CD4-positive, alpha-beta memory T cell (primary cell): ENCODE measurements at regions of chr10 and their contacts with region 1.

Region 1: DNA sequence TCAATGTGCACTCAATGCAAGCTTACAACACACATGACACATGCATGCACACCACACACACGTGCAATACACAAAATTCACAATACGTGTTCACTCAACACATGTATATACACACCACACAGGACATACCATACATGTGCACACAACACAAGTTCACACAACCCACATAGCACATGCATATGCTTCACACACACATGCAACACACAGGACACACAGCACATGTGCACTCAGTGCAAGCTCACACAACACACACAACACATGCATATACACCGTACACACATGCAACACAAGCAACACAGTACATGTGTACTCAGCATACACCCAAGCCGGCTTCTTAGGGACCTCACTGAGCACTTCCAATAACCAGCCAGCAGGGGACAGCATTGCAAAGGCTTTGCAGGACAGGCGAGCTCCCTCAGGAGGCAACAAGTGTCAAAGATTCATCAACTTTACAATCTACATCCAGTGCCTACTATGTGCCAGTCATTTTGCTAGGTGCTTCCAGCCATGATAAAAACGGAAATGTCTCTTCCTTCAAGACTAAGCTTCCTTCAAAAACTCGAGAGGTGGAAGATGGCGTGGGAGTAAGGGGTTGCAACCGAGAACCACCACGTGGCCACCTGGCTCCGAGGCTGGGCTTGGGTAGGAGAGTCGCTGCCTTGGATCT is 61.1 kb downstream of the JCAD start:
- DNase-seq: peak; percentile 68 to 74 (median 71)
- H3K4me3 ChIP-seq: no peak overlapping the region
- H3K4me3 Mint-ChIP-seq: no peak overlapping the region
- H3K27ac ChIP-seq: no peak overlapping the region
- H3K27ac Mint-ChIP-seq: no peak overlapping the region
- H3K4me1 ChIP-seq: peaks cover 12% of the 10 kb centered on the region
- H3K4me1 Mint-ChIP-seq: peaks cover 5 to 15% (median 9%) of the 10 kb centered on the region in 4 donors
- H3K27me3 ChIP-seq: no peaks in the 10 kb centered on the region
- H3K27me3 Mint-ChIP-seq: peaks cover 42 to 44% of the 10 kb centered on the region in 2 donors

Region 2: GRCh38 chr10:30027057-30028005 is 29.1 kb after region 1 on chr10:
- CTCF ChIA-PET with region 1: interaction called, 7 read pairs
- POLR2A ChIA-PET with region 1: no interaction called
- intact Hi-C with region 1: loop called (anchors 1 kb)
- DNase-seq: peak; percentile 91 to 98 (median 95)
- H3K4me3 ChIP-seq: peak overlapping the region; percentile 19 to 61
- H3K4me3 Mint-ChIP-seq: peak overlapping the region; percentile 69 to 91 (median 80)
- H3K27ac ChIP-seq: no peak overlapping the region
- H3K27ac Mint-ChIP-seq: peak overlapping the region; percentile 92 to 98 (median 94)
- H3K4me1 ChIP-seq: peaks cover 33% of the 10 kb centered on the region
- H3K4me1 Mint-ChIP-seq: peaks cover 20 to 47% (median 36%) of the 10 kb centered on the region in 4 donors
- H3K27me3 ChIP-seq: peaks cover 12% of the 10 kb centered on the region
- H3K27me3 Mint-ChIP-seq: peaks cover 33 to 36% of the 10 kb centered on the region in 2 donors

Region 3: DNA sequence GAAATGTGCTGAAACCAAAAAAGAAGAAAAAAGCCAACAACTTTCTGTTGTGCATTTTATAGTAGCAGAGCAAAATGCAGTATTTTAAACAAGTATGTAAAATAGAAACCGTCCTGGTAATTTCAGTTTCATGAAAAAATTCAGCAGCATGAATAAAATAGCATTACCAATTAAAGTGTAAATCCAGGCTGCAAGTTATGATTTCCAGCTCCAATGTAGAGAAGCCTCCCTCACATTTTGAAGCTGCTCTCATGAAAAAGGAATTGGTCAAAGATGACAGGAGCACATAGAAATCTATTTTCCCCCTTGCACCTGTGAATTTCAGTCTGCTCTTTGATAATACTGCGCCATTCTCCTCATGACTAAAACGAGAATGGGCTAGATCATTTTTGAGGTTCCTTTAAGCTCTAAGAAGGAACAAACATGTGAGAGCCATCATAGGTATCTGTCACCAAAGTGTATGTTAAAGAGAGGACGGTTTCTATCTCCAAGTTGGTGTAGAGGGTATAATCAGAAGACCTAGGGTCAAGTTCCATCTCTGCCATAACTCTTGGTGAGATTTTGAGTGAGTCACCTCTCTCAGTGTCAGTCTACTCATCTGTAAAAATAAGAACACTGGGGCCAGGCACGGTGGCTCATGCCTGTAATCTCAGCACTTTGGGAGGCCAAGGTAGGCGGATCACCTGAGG is 243.3 kb after region 1 on chr10:
- CTCF ChIA-PET with region 1: interaction called, 69 read pairs
- POLR2A ChIA-PET with region 1: interaction called, 3 read pairs
- intact Hi-C with region 1: loop called (anchors 1 kb)
- DNase-seq: no peak
- H3K4me3 ChIP-seq: no peak overlapping the region
- H3K4me3 Mint-ChIP-seq: no peak overlapping the region
- H3K27ac ChIP-seq: no peak overlapping the region
- H3K27ac Mint-ChIP-seq: no peak overlapping the region
- H3K4me1 ChIP-seq: no peaks in the 10 kb centered on the region
- H3K4me1 Mint-ChIP-seq: no peaks in the 10 kb centered on the region
- H3K27me3 ChIP-seq: no peaks in the 10 kb centered on the region
- H3K27me3 Mint-ChIP-seq: peaks cover 9 to 10% of the 10 kb centered on the region in 2 donors

Region 4: GRCh38 chr10:30384701-30385201 is 386.5 kb after region 1 on chr10:
- CTCF ChIA-PET with region 1: interaction called, 7 read pairs
- POLR2A ChIA-PET with region 1: no interaction called
- intact Hi-C with region 1: loop called (anchors 2 kb)
- DNase-seq: no peak
- H3K4me3 ChIP-seq: no peak overlapping the region
- H3K4me3 Mint-ChIP-seq: no peak overlapping the region
- H3K27ac ChIP-seq: no peak overlapping the region
- H3K27ac Mint-ChIP-seq: no peak overlapping the region
- H3K4me1 ChIP-seq: no peaks in the 10 kb centered on the region
- H3K4me1 Mint-ChIP-seq: no peaks in the 10 kb centered on the region
- H3K27me3 ChIP-seq: no peaks in the 10 kb centered on the region
- H3K27me3 Mint-ChIP-seq: peaks cover 11 to 17% of the 10 kb centered on the region in 2 donors